Astrocyte of the cerebellum (primary cell): ENCODE measurements at regions of chr3 and their contacts with region 1.

Region 1: DNA sequence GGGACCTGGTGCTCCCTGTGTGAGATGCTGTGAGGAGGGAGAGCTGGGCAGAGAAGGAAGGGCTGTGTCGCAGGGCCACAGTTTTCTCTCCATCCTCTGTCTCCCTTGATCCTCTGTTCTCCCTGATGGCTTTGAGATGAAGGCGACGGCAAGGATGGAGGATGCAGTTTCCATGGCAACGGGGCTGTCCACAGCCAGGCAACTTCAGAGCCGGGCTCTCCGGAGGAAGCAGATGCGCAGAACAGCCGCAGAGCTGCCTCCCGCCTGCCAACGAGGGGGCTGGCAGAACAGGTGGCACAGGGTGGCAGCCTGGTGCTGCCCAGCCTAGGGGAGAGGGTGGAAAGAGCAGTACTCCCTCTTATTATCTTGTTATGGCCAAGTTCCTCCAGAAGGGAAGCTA is 9.9 kb upstream of the GRM2 start:
- DNase-seq: no peak
- H3K4me3 ChIP-seq: no peak overlapping the region
- CTCF ChIP-seq: no peak

Region 2: DNA sequence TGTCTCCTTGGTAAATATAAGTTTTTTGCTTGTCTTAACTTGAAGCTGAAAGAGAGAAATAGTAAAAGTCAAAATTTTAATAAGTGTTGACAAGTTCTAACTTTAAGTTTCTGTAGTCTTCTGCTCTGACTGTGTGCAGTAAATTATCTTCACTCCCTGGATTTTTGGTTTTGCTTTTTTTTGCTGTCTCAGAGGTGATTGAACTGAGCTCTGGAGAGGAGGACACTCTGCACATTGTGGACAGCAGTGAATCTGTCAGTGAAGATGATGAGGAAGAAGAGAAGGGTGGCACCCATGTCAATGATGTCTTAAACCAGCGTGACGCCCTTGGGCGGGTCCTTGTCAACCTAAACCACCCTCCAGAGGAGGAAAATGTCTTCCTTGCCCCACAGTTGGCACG is 66.4 kb before region 1 on chr3:
- in situ Hi-C with region 1: loop called (anchors 5 kb)
- DNase-seq: no peak
- H3K4me3 ChIP-seq: no peak overlapping the region
- CTCF ChIP-seq: no peak

Region 3: DNA sequence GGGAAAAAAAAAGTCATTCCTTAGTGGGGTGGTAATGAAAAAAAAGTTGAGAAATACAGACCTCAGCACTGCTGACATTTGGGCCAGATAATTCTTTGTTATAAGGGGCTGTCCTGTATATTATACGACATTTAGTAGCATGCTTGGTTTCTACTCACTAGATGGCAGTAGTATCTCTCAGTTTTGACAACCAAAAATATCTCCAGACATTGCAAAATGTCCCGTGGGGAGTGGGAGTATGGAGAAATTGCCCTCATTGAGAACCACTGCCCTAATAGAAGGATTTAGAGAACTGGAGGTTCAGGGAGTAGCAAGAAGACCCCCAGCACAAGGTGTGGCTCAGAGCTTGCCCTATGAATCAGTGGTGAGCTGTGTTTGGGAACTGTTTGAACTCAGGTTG is 54.5 kb before region 1 on chr3:
- in situ Hi-C with region 1: no loop called
- DNase-seq: no peak
- H3K4me3 ChIP-seq: no peak overlapping the region
- CTCF ChIP-seq: peak; percentile 29

Region 4: DNA sequence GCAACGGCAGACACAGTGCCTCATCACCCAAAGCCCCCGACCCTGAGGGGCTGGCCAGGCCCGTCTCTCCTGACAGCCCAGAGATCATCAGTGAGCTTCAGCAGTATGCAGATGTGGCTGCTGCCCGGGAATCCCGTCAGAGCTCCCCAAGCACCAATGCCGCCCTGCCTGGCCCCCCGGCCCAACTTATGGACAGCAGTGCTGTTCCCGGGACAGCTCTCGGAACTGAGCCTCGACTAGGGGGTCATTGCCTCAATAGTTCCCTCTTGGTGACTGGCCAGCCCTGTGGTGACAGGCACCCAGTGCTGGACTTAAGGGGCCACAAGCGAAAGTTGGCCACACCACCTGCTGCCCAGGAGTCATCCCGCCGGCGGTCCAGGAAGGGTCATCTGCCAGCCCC is 34.5 kb before region 1 on chr3:
- in situ Hi-C with region 1: no loop called
- DNase-seq: no peak
- H3K4me3 ChIP-seq: no peak overlapping the region
- CTCF ChIP-seq: no peak